ENCODE measurements at regions of chr10 and their contacts with region 1.

Region 1: GRCh38 chr10:93482145-93482834 is at the start of gene MYOF:
- DNase-seq: peak; percentile 56 to 75
- H3K4me3 ChIP-seq: peak within 1 kb of the TSS; percentile 67
- H3K27ac ChIP-seq: peak within 1 kb of the TSS; percentile 99
- H3K4me1 ChIP-seq: 0 out of 2 replicates have a peak, but pooled peaks cover 4% of the 10 kb centered on the region
- H3K27me3 ChIP-seq: no peaks in the 10 kb centered on the region
- CTCF ChIP-seq: peak; percentile 43; the same call in 1 of the 2 replicates
- total RNA-seq, gene MYOF: 255 and 274 TPM in 2 replicates

Region 2: GRCh38 chr10:93376372-93377293 is 105.7 kb before region 1 on chr10:
- CTCF ChIA-PET with region 1: interaction called, 20 read pairs
- POLR2A ChIA-PET with region 1: interaction called, 10 read pairs
- intact Hi-C with region 1: loop called (anchors 1 kb)
- DNase-seq: peak; percentile 59 to 76
- H3K4me3 ChIP-seq: peak overlapping the region; percentile 35; the same call in 1 of the 2 replicates
- H3K27ac ChIP-seq: peak overlapping the region; percentile 90
- H3K4me1 ChIP-seq: peaks cover 21% of the 10 kb centered on the region
- H3K27me3 ChIP-seq: no peaks in the 10 kb centered on the region
- CTCF ChIP-seq: peak; percentile 89

Region 3: DNA sequence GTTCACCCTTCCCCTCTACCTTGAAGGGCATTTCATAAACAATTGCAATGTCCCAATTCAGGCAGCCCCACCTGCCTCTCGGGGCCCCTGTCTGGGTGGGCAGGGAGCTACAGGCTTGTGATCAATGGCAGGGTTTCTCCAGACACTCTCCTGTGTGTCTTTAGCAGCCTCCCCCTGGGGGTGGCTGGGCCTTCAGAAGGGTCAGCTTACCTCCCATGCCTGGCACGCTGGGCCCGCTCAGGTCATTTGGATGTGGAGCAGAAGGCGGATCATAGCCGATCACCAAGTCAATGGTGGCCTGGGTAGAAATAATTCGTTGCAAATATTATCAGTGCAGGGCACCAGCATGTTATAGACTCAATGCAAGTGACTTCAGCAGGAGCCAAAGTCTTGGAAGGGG is 56.4 kb before region 1 on chr10:
- CTCF ChIA-PET with region 1: interaction called, 3 read pairs
- POLR2A ChIA-PET with region 1: no interaction called
- intact Hi-C with region 1: loop called (anchors 1 kb)
- DNase-seq: no peak
- H3K4me3 ChIP-seq: no peak overlapping the region
- H3K27ac ChIP-seq: peak overlapping the region; percentile 55
- H3K4me1 ChIP-seq: no peaks in the 10 kb centered on the region
- H3K27me3 ChIP-seq: no peaks in the 10 kb centered on the region
- CTCF ChIP-seq: no peak

Region 4: DNA sequence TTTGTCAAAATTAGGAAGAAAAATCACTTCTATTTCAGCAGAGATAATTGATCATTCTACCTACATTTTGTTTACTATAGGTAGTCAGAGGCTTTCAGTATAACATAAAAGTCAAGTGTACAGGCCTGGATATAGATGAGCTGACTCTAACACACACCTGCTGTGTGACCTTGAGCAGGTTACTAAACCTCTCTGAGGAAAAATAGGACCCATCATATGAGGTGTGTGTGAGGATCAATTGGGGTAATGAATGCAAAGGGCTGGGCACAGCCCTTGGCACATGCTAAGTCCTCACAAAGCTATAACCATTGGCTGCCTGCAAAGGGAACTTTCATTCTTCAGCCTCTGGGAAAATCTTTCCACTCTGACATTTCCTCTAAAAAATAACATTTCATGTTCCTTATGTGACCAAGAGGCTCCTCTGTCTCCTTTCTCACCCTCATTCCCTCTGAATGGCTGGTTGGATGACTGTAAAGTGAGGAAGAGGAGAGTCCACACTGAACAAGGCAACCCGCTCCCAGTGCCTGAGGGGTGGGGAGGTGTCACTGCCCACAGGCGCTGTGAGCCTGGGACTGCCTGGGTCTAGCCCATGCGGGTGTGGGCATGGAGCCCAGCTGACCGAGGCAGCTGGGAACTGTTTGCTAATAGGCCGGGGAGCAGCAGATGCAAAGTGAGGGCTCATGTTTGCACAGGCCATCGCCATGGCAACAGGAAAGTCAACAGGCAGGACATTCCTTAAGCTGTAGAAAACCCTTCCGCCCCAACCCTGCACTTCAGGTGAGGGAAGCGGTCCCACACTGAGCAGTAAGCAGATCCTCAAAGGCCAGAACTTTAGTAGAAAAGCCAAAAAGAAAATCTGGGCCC is 37.0 kb before region 1 on chr10:
- CTCF ChIA-PET with region 1: no interaction called
- POLR2A ChIA-PET with region 1: interaction called, 13 read pairs
- intact Hi-C with region 1: loop called (anchors 2 kb)
- DNase-seq: peak; percentile 92 to 96
- H3K4me3 ChIP-seq: no peak overlapping the region
- H3K27ac ChIP-seq: peak overlapping the region; percentile 63
- H3K4me1 ChIP-seq: peaks cover 54% of the 10 kb centered on the region
- H3K27me3 ChIP-seq: no peaks in the 10 kb centered on the region
- CTCF ChIP-seq: no peak

Region 5: DNA sequence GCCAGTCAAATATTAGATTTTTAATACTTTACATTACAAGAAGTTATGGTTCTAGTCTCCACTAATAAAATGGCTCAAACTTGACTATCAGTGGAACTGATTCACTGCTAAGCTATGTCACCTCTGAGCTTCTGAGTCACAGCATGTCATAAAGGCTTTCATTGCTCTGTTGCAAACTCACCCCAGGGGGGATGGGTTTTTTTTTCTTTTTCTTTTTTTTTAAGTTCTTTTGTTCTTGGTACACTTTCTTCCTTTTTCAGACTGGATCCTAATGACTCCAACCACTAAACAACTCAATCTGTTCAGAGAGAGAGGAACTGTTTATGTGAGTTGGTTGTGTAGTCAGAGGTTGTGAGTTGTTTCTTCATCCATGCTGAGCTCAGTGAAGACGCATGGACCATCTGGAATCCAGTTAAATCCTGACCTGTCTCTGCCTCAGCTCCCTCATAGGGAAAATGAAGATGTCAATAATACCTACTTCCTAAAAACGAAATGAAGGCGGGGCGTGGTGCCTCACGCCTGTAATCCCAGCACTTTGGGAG is 11.1 kb before region 1 on chr10:
- CTCF ChIA-PET with region 1: interaction called, 5 read pairs
- POLR2A ChIA-PET with region 1: interaction called, 11 read pairs
- intact Hi-C with region 1: loop called (anchors 1 kb)
- DNase-seq: peak in 1 of 2 experiments; percentile 81
- H3K4me3 ChIP-seq: 0 out of 2 replicates have a peak overlapping the region, but pooled peaks have one; percentile 8
- H3K27ac ChIP-seq: peak overlapping the region; percentile 97
- H3K4me1 ChIP-seq: peaks cover 70% of the 10 kb centered on the region
- H3K27me3 ChIP-seq: no peaks in the 10 kb centered on the region
- CTCF ChIP-seq: no peak

Region 6: GRCh38 chr10:94916423-94916822 is 1434.1 kb after region 1 on chr10:
- CTCF ChIA-PET with region 1: no interaction called
- POLR2A ChIA-PET with region 1: no interaction called
- intact Hi-C with region 1: no loop called
- DNase-seq: no peak
- H3K4me3 ChIP-seq: no peak overlapping the region
- H3K27ac ChIP-seq: no peak overlapping the region
- H3K4me1 ChIP-seq: no peaks in the 10 kb centered on the region
- H3K27me3 ChIP-seq: no peaks in the 10 kb centered on the region
- CTCF ChIP-seq: no peak

Measured in PC-9 (cell line).